H1 (cell line): ENCODE measurements at regions of chr15 and their contacts with region 1.

Region 1: DNA sequence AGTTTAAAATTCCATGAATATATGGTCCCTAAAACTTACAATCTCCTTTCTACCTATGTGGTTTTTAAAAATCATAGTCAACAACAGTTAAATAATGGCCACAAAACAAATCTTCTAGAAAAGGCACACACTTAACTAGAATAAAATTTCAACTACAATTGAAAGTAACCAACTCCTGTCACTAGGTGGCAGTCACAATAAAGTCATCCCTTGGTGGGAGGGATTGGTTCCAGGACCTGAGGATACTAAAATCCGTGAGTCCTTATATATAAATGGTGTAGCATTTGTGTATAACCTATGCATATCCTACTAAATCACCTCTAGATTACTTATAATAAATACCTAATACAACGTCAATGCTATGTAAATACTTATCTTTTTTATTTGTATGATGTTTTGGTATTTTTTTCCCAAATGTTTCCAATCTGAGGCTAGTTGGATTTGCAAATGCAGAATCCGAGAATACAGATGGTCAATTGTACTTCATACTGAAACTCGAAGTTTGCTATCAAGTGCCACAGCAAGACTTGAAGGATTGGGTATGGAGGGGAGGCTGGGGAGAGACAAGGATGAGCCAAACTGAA is 172.6 kb downstream of the FMN1 start:
- DNase-seq: no peak
- H3K4me3 ChIP-seq: no peak overlapping the region
- H3K27ac ChIP-seq: no peak overlapping the region
- H3K4me1 ChIP-seq: peaks cover 0 to 6% (median 4%) of the 10 kb centered on the region in 4 experiments
- H3K27me3 ChIP-seq: no peaks in the 10 kb centered on the region
- CTCF ChIP-seq: peak in 2 of 3 experiments; percentile 54 to 61; a peak in 2 of 4 replicates
- EP300 ChIP-seq: no peak
- POLR2A ChIP-seq: no peak
- RAD21 ChIP-seq: peak; percentile 63 to 73

Region 2: GRCh38 chr15:32965897-32966296 is 56.0 kb before region 1 on chr15:
- CTCF ChIA-PET with region 1: no interaction called
- POLR2A ChIA-PET with region 1: no interaction called
- DNase-seq: no peak
- H3K4me3 ChIP-seq: no peak overlapping the region
- H3K27ac ChIP-seq: no peak overlapping the region
- H3K4me1 ChIP-seq: no peaks in the 10 kb centered on the region
- H3K27me3 ChIP-seq: no peaks in the 10 kb centered on the region
- CTCF ChIP-seq: no peak
- EP300 ChIP-seq: no peak
- POLR2A ChIP-seq: no peak
- RAD21 ChIP-seq: no peak

Region 3: DNA sequence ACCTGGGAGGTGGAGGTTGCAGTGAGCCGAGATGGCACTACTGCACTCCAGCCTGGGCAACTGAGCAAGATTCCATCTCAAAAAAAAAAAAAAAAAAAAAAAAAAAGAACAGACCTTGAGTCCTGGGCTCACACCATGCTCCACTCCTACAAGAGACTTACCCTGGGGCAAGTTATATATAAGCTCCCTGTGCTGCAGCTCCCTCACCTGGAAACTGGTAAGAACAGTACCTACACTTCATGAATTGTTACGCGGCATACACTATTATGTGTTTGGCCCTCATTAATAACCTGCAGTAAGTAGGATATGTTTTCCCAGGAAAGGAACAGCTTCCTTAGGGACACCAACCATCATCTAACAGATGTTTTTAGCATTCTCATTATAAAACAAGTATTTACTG is 53.0 kb after region 1 on chr15:
- CTCF ChIA-PET with region 1: interaction called, 34 read pairs
- POLR2A ChIA-PET with region 1: no interaction called
- DNase-seq: no peak
- H3K4me3 ChIP-seq: no peak overlapping the region
- H3K27ac ChIP-seq: no peak overlapping the region
- H3K4me1 ChIP-seq: no peaks in the 10 kb centered on the region
- H3K27me3 ChIP-seq: no peaks in the 10 kb centered on the region
- CTCF ChIP-seq: peak in 2 of 3 experiments; percentile 50 to 55; a peak in 3 of 4 replicates
- EP300 ChIP-seq: no peak
- POLR2A ChIP-seq: no peak
- RAD21 ChIP-seq: peak; percentile 69 to 75

Region 4: GRCh38 chr15:33104212-33104611 is 82.3 kb after region 1 on chr15:
- CTCF ChIA-PET with region 1: no interaction called
- POLR2A ChIA-PET with region 1: no interaction called
- DNase-seq: no peak
- H3K4me3 ChIP-seq: no peak overlapping the region
- H3K27ac ChIP-seq: no peak overlapping the region
- H3K4me1 ChIP-seq: no peaks in the 10 kb centered on the region
- H3K27me3 ChIP-seq: no peaks in the 10 kb centered on the region
- CTCF ChIP-seq: no peak
- EP300 ChIP-seq: no peak
- POLR2A ChIP-seq: no peak
- RAD21 ChIP-seq: no peak